Activated CD8-positive, alpha-beta T cell treated with anti-CD3 and anti-CD28 coated beads for 36 hours (primary cell): ENCODE measurements at regions of chr3 and their contacts with region 1.

Region 1: DNA sequence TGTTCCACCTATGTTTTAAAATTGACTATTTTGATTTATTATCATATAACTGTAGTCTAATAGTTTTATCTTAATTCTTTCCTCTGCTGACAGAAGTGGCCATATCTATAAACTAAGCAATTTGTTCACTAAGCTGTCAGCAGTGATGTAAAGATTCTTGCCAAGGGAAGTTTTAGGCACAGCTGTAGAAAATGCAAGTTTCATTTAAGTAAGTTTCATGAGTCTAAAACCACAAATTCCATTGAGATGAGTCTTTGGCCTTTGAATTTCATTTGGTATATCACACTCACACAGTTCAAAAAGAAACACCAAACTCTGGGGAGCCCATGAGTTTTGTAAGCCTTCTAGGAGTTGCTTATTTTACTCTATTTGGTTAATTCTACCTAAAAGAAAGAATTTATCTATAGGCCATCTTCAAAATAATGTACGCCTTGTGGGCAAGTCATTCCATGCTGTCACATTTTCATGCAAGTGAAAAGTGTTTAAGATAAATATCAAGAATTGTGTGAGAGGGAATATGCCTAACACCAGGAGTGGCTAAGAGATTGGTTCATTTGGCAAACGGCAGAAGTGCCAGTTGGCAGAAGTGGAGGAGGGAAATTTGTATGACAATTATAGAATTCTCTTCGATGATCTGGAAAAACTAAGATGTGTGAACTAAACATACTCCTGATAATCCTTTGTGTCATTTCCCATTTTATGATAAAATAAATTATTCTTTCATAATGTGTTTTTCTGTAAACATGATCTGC is 292.9 kb downstream of the ZIC4 start:
- DNase-seq: no peak
- ATAC-seq: no peak
- H3K4me3 Mint-ChIP-seq: no peak overlapping the region
- H3K27ac Mint-ChIP-seq: no peak overlapping the region
- H3K4me1 Mint-ChIP-seq: no peaks in the 10 kb centered on the region
- H3K27me3 Mint-ChIP-seq: no peaks in the 10 kb centered on the region
- CTCF ChIP-seq: no peak

Region 2: GRCh38 chr3:147161833-147162232 is 48.4 kb after region 1 on chr3:
- CTCF ChIA-PET with region 1: no interaction called
- POLR2A ChIA-PET with region 1: no interaction called
- intact Hi-C with region 1: loop called (anchors 10 kb)
- DNase-seq: no peak
- ATAC-seq: no peak
- H3K4me3 Mint-ChIP-seq: no peak overlapping the region
- H3K27ac Mint-ChIP-seq: no peak overlapping the region
- H3K4me1 Mint-ChIP-seq: no peaks in the 10 kb centered on the region
- H3K27me3 Mint-ChIP-seq: no peaks in the 10 kb centered on the region
- CTCF ChIP-seq: no peak

Region 3: DNA sequence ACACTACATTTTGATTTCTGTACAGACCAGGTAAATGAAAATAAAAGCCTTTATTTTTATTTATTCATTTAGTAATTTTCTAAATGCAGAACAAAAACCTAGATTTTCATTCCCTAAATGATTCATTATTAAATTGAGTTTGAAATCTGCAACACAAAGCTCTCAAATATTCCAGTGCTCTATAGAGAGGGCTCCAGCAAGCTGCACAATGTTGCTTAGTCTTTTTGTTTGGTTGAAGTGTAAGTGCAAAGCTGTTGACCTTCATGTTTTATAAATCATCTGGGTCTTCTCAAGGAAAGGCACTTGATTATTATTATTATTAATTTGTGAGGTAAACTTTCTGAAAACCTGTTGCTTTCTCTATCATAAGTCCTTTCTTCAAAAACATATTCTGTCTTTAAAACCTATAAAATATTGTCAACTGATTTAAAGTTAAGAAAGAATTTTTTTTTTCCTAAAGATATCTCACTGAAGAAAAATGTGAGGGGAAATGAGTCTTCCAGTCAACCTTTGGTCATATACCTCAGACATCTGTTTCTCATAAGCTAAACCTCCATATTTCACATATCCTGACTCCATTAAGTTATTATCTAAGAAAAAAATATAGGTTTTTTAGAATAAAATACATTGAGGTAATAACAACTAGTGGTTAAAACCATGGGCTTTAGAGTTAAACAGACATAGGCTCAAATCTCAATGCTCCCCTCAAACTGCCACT is 192.2 kb after region 1 on chr3:
- CTCF ChIA-PET with region 1: no interaction called
- POLR2A ChIA-PET with region 1: no interaction called
- intact Hi-C with region 1: no loop called
- DNase-seq: no peak
- ATAC-seq: no peak
- H3K4me3 Mint-ChIP-seq: no peak overlapping the region
- H3K27ac Mint-ChIP-seq: no peak overlapping the region
- H3K4me1 Mint-ChIP-seq: no peaks in the 10 kb centered on the region
- H3K27me3 Mint-ChIP-seq: no peaks in the 10 kb centered on the region
- CTCF ChIP-seq: no peak